ENCODE measurements at regions of chr17 and their contacts with region 1.

Region 1: GRCh38 chr17:14300575-14301278 is at the start of gene HS3ST3B1:
- DNase-seq: peak; percentile 100
- H3K4me3 Mint-ChIP-seq: peak within 1 kb of the TSS; percentile 93
- H3K27ac Mint-ChIP-seq: peak within 1 kb of the TSS; percentile 92
- H3K4me1 Mint-ChIP-seq: peaks cover 49% of the 10 kb centered on the region
- H3K27me3 Mint-ChIP-seq: peaks cover 26% of the 10 kb centered on the region
- total RNA-seq, gene HS3ST3B1: 13.4 to 13.9 TPM

Region 2: GRCh38 chr17:13594762-13595598 is 705.7 kb before region 1 on chr17:
- CTCF ChIA-PET with region 1: interaction called, 43 read pairs
- POLR2A ChIA-PET with region 1: no interaction called
- intact Hi-C with region 1: loop called (anchors 1 kb)
- DNase-seq: peak; percentile 84
- H3K4me3 Mint-ChIP-seq: no peak overlapping the region
- H3K27ac Mint-ChIP-seq: no peak overlapping the region
- H3K4me1 Mint-ChIP-seq: peaks cover 3% of the 10 kb centered on the region
- H3K27me3 Mint-ChIP-seq: peaks cover 19% of the 10 kb centered on the region

Region 3: GRCh38 chr17:14196377-14196997 is 104.2 kb before region 1 on chr17:
- CTCF ChIA-PET with region 1: interaction called, 7 read pairs
- POLR2A ChIA-PET with region 1: interaction called, 27 read pairs
- intact Hi-C with region 1: loop called (anchors 1 kb)
- DNase-seq: no peak
- H3K4me3 Mint-ChIP-seq: peak overlapping the region; percentile 34
- H3K27ac Mint-ChIP-seq: peak overlapping the region; percentile 85
- H3K4me1 Mint-ChIP-seq: peaks cover 83% of the 10 kb centered on the region
- H3K27me3 Mint-ChIP-seq: no peaks in the 10 kb centered on the region

Region 4: DNA sequence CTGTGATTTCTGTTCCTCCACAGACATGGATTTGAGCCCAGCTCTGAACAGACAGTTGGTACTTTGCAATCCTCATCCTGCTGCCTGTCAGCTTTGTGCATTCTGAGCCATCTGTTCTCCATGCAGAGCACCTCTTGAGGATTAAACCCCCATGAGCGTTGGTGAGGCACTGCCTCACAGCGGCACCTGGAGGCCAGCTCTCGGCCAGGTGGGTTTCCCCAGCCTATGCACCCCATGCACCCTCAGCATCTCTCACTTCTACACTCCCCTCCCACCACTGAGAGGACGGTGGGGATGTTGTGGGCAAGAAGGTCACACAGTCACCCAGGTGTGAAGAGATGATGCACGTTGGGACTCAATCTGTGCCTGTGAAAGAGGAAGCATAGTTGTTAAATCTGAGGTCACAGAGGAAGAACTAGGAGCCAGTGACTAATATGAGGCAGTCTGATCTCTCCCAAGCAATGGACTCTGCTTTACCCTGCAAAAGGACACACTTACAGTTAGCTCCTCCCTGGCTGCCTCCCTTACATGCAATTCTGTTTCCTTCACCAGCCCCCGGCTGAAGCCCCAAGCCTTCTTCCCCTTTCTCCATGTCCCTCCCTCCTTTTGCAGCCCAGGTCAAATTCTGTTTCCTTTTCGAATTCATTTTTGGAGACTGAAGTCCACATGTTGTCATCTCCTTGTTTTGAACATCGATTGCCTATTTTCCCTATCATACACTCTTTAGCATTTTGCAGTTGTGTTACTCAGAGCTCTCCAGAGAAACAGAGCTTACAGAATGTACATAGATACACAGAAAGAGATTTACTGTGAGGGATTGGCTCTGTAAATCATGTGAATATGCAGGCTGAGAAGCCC is 58.7 kb after region 1 on chr17:
- CTCF ChIA-PET with region 1: no interaction called
- POLR2A ChIA-PET with region 1: no interaction called
- intact Hi-C with region 1: loop called (anchors 2 kb)
- DNase-seq: peak; percentile 77
- H3K4me3 Mint-ChIP-seq: no peak overlapping the region
- H3K27ac Mint-ChIP-seq: no peak overlapping the region
- H3K4me1 Mint-ChIP-seq: peaks cover 13% of the 10 kb centered on the region
- H3K27me3 Mint-ChIP-seq: no peaks in the 10 kb centered on the region

Region 5: GRCh38 chr17:14616528-14616927 is 315.8 kb after region 1 on chr17:
- CTCF ChIA-PET with region 1: no interaction called
- POLR2A ChIA-PET with region 1: no interaction called
- intact Hi-C with region 1: no loop called
- DNase-seq: no peak
- H3K4me3 Mint-ChIP-seq: no peak overlapping the region
- H3K27ac Mint-ChIP-seq: no peak overlapping the region
- H3K4me1 Mint-ChIP-seq: no peaks in the 10 kb centered on the region
- H3K27me3 Mint-ChIP-seq: peaks cover 10% of the 10 kb centered on the region

Region 6: GRCh38 chr17:14813649-14814365 is 513.1 kb after region 1 on chr17:
- CTCF ChIA-PET with region 1: no interaction called
- POLR2A ChIA-PET with region 1: no interaction called
- intact Hi-C with region 1: loop called (anchors 10 kb)
- DNase-seq: peak; percentile 32
- H3K4me3 Mint-ChIP-seq: no peak overlapping the region
- H3K27ac Mint-ChIP-seq: no peak overlapping the region
- H3K4me1 Mint-ChIP-seq: peaks cover 11% of the 10 kb centered on the region
- H3K27me3 Mint-ChIP-seq: peaks cover 14% of the 10 kb centered on the region

Measured in activated CD4-positive, alpha-beta memory T cell treated with anti-CD3 and anti-CD28 coated beads for 36 hours (primary cell).